ENCODE measurements at regions of chr17 and their contacts with region 1.

Region 1: GRCh38 chr17:42193969-42194899 is at the start of gene GHDC:
- DNase-seq: peak; percentile 80
- ATAC-seq: peak; percentile 93
- H3K4me3 ChIP-seq: peak within 1 kb of the TSS; percentile 62 to 94 (median 68)
- H3K27ac ChIP-seq: peak within 1 kb of the TSS; percentile 29
- H3K4me1 ChIP-seq: peaks cover 21% of the 10 kb centered on the region
- H3K27me3 ChIP-seq: no peaks in the 10 kb centered on the region; a peak in 1 of 5 replicates
- CTCF ChIP-seq: peak; percentile 39; the same call in 1 of the 2 replicates
- EP300 ChIP-seq: 0 out of 4 replicates have a peak, but pooled peaks of 1 of the 2 experiments have one; percentile 21
- POLR2A ChIP-seq: peak; percentile 45 to 96; a peak in 3 of 4 replicates
- RAD21 ChIP-seq: no peak
- total RNA-seq, gene GHDC: 8.8 and 22.5 TPM in 2 replicates

Region 2: DNA sequence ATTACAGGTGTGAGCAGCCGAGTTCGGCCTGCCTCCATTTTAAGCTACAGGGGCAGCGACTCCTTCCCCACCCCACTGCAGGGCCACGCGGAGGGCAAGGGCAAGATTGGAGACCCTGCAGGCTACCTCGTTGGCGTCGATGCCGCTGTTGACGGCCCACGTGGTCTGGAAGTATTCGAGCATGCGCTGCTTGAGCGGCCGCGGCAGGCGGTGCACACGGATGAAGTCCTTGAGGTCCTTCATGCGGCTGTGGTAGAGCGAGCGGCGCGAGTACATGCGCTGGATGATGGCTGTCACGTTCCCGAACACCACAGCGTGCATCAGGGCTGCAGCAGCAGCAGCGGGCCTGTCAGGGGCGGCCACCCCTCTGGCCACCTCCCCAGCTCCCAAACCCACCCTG is 24.9 kb before region 1 on chr17:
- CTCF ChIA-PET with region 1: no interaction called
- POLR2A ChIA-PET with region 1: no interaction called
- in situ Hi-C with region 1: no loop called
- intact Hi-C with region 1: no loop called
- DNase-seq: no peak
- ATAC-seq: no peak
- H3K4me3 ChIP-seq: no peak overlapping the region
- H3K27ac ChIP-seq: no peak overlapping the region
- H3K4me1 ChIP-seq: peaks cover 16% of the 10 kb centered on the region
- H3K27me3 ChIP-seq: peaks cover 6 to 53% of the 10 kb centered on the region in 2 experiments; a peak in 4 of 5 replicates
- CTCF ChIP-seq: no peak
- EP300 ChIP-seq: no peak
- POLR2A ChIP-seq: no peak
- RAD21 ChIP-seq: no peak

Region 3: GRCh38 chr17:42183741-42184711 is 10.2 kb before region 1 on chr17:
- CTCF ChIA-PET with region 1: no interaction called
- POLR2A ChIA-PET with region 1: interaction called, 30 read pairs
- in situ Hi-C with region 1: no loop called
- intact Hi-C with region 1: no loop called
- DNase-seq: peak; percentile 70
- ATAC-seq: peak; percentile 78
- H3K4me3 ChIP-seq: peak overlapping the region; percentile 73 to 88 (median 84)
- H3K27ac ChIP-seq: peak overlapping the region; percentile 43
- H3K4me1 ChIP-seq: peaks cover 52% of the 10 kb centered on the region
- H3K27me3 ChIP-seq: peaks cover 0 to 21% of the 10 kb centered on the region in 2 experiments; a peak in 4 of 5 replicates
- CTCF ChIP-seq: peak; percentile 90
- EP300 ChIP-seq: 0 out of 4 replicates have a peak, but pooled peaks of 1 of the 2 experiments have one; percentile 19
- POLR2A ChIP-seq: peak; percentile 51 to 74; a peak in 2 of 4 replicates
- RAD21 ChIP-seq: peak; percentile 94

Measured in HepG2 (cell line).